ENCODE measurements at regions of chr5 and their contacts with region 1.

Region 1: DNA sequence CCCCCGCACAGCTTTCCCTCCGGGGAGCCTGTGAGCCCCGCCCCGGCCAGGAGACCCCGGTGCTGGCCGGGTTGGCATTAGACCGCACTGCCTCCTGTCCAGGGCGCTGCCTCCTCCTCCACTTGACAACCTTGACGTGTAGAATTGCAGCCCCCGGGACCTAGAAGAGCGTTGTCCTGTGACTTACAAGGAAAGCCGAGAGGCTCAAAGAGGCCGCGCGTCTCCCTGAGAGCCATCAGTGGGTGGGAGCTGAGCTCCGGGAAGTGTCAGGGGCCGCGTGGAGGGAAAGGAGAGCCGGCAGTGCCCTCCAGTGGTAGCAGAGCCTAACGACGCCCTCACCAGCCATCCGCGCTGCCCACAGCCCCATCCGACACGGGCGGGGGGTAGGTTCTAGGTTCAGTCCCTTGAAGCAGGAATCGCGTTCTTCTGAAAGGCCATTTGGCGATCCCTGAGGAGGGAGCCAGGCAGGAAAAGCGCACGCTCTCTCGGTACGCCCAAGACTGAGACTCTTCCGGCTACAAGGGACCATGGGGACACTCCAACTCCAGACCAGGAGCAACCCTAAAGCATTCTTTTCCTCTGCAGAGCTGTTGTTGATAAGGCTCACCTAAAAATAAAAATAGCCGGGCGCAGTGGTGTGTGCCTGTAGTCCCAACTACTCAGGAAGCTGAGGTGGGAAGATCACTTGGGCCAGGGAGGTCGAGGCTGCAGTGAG is 40.6 kb upstream of the SAP30L start:
- H3K4me3 ChIP-seq: no peak overlapping the region; the same call in 1 of the 2 replicates
- H3K27ac ChIP-seq: no peak overlapping the region
- H3K4me1 ChIP-seq: no peaks in the 10 kb centered on the region
- CTCF ChIP-seq: peak; percentile 95

Region 2: GRCh38 chr5:153974131-153974812 is 431.0 kb before region 1 on chr5:
- CTCF ChIA-PET with region 1: interaction called, 36 read pairs
- POLR2A ChIA-PET with region 1: no interaction called
- H3K4me3 ChIP-seq: no peak overlapping the region
- H3K27ac ChIP-seq: no peak overlapping the region
- H3K4me1 ChIP-seq: no peaks in the 10 kb centered on the region
- CTCF ChIP-seq: peak; percentile 37; the same call in 1 of the 2 replicates

Region 3: DNA sequence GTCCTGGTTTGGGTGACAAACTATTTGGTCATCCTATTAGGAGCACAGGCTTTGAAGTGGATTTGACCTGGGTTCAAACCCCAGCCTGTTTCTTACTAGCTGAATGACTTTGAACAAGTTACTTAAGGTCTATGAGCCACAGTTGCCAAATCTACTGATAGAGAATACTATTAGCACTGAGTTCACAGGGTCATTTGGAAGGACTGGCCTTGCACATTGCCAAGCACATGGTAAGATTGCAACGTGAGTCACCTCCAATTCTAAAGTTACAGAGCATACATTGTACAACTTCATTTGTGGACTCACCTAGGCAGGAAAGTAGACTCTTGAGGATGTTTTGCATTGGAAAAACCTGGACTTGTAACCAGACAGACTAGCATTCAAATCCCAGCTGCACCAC is 327.5 kb before region 1 on chr5:
- CTCF ChIA-PET with region 1: interaction called, 96 read pairs
- POLR2A ChIA-PET with region 1: interaction called, 6 read pairs
- H3K4me3 ChIP-seq: no peak overlapping the region
- H3K27ac ChIP-seq: no peak overlapping the region
- H3K4me1 ChIP-seq: peaks cover 11% of the 10 kb centered on the region
- CTCF ChIP-seq: no peak

Region 4: GRCh38 chr5:154179846-154180710 is 225.2 kb before region 1 on chr5:
- CTCF ChIA-PET with region 1: interaction called, 21 read pairs
- POLR2A ChIA-PET with region 1: no interaction called
- H3K4me3 ChIP-seq: no peak overlapping the region
- H3K27ac ChIP-seq: no peak overlapping the region
- H3K4me1 ChIP-seq: peaks cover 3% of the 10 kb centered on the region
- CTCF ChIP-seq: peak; percentile 57

Region 5: GRCh38 chr5:154189819-154190594 is 215.2 kb before region 1 on chr5:
- CTCF ChIA-PET with region 1: interaction called, 9 read pairs
- POLR2A ChIA-PET with region 1: interaction called, 10 read pairs
- H3K4me3 ChIP-seq: peak overlapping the region; percentile 65
- H3K27ac ChIP-seq: peak overlapping the region; percentile 60; the same call in 1 of the 2 replicates
- H3K4me1 ChIP-seq: peaks cover 7% of the 10 kb centered on the region; the same call in 1 of the 2 replicates
- CTCF ChIP-seq: peak; percentile 89

Region 6: GRCh38 chr5:154421868-154422267 is 16.6 kb after region 1 on chr5:
- CTCF ChIA-PET with region 1: interaction called, 14 read pairs
- POLR2A ChIA-PET with region 1: interaction called, 3 read pairs
- H3K4me3 ChIP-seq: no peak overlapping the region
- H3K27ac ChIP-seq: no peak overlapping the region
- H3K4me1 ChIP-seq: no peaks in the 10 kb centered on the region
- CTCF ChIP-seq: peak; percentile 36; the same call in 1 of the 2 replicates

Region 7: DNA sequence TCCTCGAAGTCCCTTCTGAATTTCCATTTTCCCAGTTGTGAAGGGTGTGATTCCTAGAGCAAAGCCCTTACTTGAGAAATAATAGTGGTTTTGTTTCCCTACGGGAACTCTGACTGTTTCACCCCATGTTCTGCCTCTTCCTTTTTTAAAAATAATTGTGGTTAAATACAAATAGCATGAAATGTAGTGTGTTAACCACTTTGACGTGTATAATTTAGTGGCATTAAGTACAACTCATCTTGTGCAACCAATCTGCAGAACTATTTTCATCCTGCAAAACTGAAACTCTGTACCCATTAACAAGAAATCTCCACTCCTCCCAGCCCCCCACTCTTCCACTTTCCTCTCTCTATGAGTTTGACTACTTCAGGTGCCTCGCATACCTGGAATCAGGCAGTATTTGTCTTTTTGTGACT is 108.4 kb after region 1 on chr5:
- CTCF ChIA-PET with region 1: no interaction called
- POLR2A ChIA-PET with region 1: no interaction called
- H3K4me3 ChIP-seq: no peak overlapping the region
- H3K27ac ChIP-seq: no peak overlapping the region
- H3K4me1 ChIP-seq: no peaks in the 10 kb centered on the region
- CTCF ChIP-seq: no peak

Measured in HEK293 (cell line).